ENCODE measurements at regions of chr17 and their contacts with region 1.

Region 1: GRCh38 chr17:29931231-29931932 is 1.4 kb upstream of the SSH2 start:
- DNase-seq: peak; percentile 75
- H3K4me3 ChIP-seq: peak overlapping the region; percentile 84 to 99
- H3K27ac ChIP-seq: peak overlapping the region; percentile 80 to 83
- H3K4me1 ChIP-seq: peaks cover 21 to 24% of the 10 kb centered on the region in 2 experiments; a peak in 3 of 4 replicates
- H3K27me3 ChIP-seq: no peaks in the 10 kb centered on the region
- CTCF ChIP-seq: peak; percentile 96
- EP300 ChIP-seq: no peak
- RAD21 ChIP-seq: peak; percentile 93

Region 2: DNA sequence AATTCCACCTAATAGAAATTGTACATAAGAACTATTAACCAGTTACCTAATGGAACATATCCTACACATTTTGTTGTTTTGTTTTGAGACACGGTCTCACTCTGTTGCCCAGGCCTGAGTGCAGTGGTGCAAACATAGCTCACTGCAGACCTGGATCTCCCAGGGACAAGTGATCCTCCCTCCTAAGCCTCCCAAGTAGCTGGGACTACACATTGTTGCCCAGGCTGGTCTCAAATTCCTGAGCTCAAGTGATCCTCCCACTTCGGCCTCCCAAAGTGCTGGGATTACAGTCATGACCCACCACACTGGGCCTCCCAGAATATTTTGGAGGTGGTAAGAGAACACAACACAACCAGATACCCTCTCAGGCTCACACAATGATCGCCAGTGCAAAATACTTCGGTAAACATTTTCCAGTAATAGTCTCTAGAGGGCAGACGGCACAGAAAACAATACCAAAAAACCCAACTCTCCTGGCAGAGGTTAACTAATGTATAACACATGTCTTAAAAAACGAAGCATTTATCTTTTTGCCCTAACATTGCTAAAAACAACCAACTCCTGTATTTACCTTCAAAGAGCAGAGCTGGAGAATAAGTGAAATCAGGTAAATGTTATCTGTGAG is 648.0 kb before region 1 on chr17:
- CTCF ChIA-PET with region 1: no interaction called
- POLR2A ChIA-PET with region 1: no interaction called
- DNase-seq: peak; percentile 49
- H3K4me3 ChIP-seq: no peak overlapping the region
- H3K27ac ChIP-seq: peak overlapping the region; percentile 4 to 64; a peak in 3 of 4 replicates
- H3K4me1 ChIP-seq: peaks cover 0 to 13% of the 10 kb centered on the region in 2 experiments; a peak in 2 of 4 replicates
- H3K27me3 ChIP-seq: no peaks in the 10 kb centered on the region
- CTCF ChIP-seq: peak; percentile 51
- EP300 ChIP-seq: no peak
- RAD21 ChIP-seq: peak; percentile 16; the same call in 1 of the 2 replicates

Region 3: DNA sequence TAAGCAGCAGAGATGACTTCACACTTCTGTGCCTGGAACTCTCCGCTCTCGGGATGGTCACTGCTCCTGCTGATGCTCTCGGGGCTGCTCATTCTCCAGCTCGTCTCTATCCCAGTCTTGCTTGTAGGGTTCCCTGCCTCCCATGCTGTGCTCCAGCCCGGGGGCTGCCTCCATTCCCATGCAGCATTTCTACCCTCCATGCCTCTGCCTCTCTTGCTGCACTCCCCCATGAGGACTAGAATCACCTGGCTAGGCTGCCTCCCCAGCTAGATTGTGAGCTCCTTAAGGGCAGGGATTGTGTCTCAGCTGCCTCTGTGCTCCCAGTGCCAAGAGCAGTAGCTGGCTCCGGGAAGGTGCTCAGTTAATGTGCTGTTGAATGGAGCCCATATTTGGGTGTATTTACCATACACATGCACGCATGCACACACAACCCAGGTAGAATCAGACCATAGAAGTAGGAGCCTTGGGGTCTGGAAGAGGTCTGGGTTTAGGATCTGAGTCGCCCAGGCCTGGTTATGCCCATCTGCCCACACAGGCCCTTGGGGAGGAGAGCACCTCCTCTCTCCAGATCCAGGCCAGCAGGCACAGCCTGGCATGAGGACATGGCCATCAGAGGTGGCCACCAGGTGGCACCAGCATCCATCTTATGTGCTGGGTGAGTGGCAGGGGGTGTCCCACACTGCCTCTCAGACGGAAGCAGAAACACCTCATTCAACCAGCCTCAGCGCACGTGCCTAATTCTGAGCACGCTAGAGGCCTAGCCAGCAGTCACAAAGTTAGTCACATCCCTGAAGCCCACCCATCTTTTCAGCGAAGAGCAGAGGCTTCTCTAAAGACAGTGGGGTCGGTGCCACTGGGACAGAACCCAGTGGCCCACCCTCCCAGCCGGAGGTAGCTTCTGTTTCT is 351.3 kb before region 1 on chr17:
- CTCF ChIA-PET with region 1: interaction called, 13 read pairs
- POLR2A ChIA-PET with region 1: no interaction called
- DNase-seq: peak; percentile 96
- H3K4me3 ChIP-seq: peak overlapping the region in 1 of 2 experiments; percentile 32; a peak in 1 of 4 replicates
- H3K27ac ChIP-seq: peak overlapping the region in 1 of 2 experiments; percentile 53; a peak in 2 of 4 replicates
- H3K4me1 ChIP-seq: peaks cover 2 to 17% of the 10 kb centered on the region in 2 experiments; a peak in 2 of 4 replicates
- H3K27me3 ChIP-seq: no peaks in the 10 kb centered on the region
- CTCF ChIP-seq: peak; percentile 85
- EP300 ChIP-seq: no peak
- RAD21 ChIP-seq: peak; percentile 92

Region 4: GRCh38 chr17:29640413-29640812 is 291.0 kb before region 1 on chr17:
- CTCF ChIA-PET with region 1: interaction called, 42 read pairs
- POLR2A ChIA-PET with region 1: interaction called, 6 read pairs
- DNase-seq: no peak
- H3K4me3 ChIP-seq: no peak overlapping the region
- H3K27ac ChIP-seq: peak overlapping the region; percentile 52 to 89
- H3K4me1 ChIP-seq: peaks cover 54% of the 10 kb centered on the region in 2 experiments; a peak in 3 of 4 replicates
- H3K27me3 ChIP-seq: no peaks in the 10 kb centered on the region
- CTCF ChIP-seq: no peak
- EP300 ChIP-seq: no peak
- RAD21 ChIP-seq: no peak

Region 5: DNA sequence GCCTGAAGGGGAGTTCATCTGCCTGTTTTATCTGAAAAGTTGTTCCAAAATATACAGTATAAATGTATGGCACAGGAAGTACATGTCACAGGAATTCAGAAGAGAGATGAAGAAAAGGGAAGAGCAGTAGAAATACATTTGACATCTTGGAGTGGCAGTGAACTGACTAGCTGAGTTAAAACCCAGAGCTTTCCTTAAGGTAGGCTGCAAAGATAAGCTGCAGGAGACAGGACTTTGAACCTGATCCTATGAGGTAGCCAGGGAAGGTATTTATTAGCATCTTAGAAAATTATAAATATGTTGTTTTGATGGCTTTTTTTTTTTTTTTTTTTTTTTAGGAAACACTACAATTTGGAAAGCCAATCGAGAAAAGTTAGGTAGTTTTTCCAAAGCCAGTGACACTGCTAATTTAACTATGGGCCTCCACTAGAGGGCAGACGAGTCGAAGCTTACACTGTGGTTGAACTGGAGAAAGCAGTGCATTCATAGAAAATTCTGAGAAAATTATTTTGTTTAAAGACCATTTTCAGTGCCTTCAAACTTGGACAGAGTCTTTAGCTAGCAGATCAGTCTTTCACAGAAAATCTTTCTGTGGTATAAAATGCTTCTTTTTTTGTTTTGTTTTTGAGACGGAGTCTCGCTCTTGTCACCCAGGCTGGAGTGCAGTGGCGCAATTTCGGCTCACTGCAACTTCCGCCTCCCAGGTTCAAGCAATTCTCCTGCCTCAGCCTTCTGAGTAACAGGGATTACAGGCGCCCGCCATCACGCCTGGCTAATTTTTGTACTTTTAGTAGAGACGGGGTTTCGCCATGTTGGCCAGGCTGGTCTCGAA is 123.6 kb before region 1 on chr17:
- CTCF ChIA-PET with region 1: interaction called, 118 read pairs
- POLR2A ChIA-PET with region 1: interaction called, 4 read pairs
- DNase-seq: peak; percentile 67
- H3K4me3 ChIP-seq: no peak overlapping the region; a peak in 1 of 4 replicates
- H3K27ac ChIP-seq: peak overlapping the region in 1 of 2 experiments; percentile 61; a peak in 2 of 4 replicates
- H3K4me1 ChIP-seq: peaks cover 3 to 10% of the 10 kb centered on the region in 2 experiments; a peak in 3 of 4 replicates
- H3K27me3 ChIP-seq: no peaks in the 10 kb centered on the region
- CTCF ChIP-seq: peak; percentile 85
- EP300 ChIP-seq: no peak
- RAD21 ChIP-seq: peak; percentile 93

Region 6: DNA sequence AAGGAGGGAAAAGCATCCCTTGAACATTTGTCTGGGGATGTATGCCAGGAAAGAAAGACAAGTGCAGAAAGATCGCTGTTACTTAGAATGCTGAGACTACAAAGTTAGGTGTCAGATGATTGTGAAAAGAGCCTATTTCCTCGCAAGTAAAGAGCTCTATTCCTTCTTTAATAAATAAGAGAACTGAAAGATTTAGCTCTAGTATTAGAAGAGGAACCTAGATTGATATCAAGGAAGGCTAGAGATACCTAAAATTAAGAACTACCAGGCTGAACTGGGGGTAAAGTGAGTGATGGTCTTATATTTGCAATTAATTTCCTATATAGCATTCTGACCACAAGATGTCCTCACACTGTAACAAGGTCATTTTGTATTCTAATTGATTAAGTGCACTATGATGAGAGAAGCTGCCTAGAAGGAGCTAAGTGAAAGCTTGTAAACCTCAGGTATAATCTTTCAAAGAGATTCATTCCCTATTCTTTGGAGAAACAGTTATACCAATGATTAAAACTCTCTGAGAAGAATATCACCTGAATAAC is 63.7 kb before region 1 on chr17:
- CTCF ChIA-PET with region 1: interaction called, 42 read pairs
- POLR2A ChIA-PET with region 1: no interaction called
- DNase-seq: no peak
- H3K4me3 ChIP-seq: no peak overlapping the region
- H3K27ac ChIP-seq: no peak overlapping the region
- H3K4me1 ChIP-seq: peaks cover 5 to 8% of the 10 kb centered on the region in 2 experiments; a peak in 3 of 4 replicates
- H3K27me3 ChIP-seq: no peaks in the 10 kb centered on the region
- CTCF ChIP-seq: peak; percentile 50
- EP300 ChIP-seq: no peak
- RAD21 ChIP-seq: peak; percentile 54

Region 7: DNA sequence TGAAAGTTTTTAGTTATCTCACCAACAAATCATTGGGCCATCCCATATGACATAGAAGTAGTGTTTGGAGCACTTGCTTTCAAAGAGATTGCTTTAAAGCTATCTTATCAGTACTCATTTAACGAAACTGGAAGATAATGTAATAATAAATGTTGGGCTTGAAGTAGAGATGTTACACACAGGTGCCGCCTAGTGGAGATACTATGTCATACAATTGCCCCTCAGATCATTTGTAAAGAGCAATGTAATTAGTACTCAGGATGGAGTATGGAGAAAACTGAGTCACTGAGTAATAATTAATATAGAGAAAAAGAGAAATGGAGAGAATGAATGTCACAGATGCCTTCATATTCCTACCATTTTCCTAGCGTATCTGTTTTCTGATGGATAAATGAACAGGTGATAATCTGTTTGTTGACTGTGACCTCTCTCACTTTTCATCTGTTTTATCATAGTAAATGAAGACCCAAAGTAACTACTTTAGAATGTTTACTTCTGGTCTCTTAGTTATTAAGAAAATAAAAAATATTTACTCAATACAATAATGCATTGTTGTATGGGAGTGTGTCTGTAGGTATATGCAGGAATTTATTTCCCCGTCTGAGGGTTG is 90.4 kb after region 1 on chr17:
- CTCF ChIA-PET with region 1: interaction called, 12 read pairs
- POLR2A ChIA-PET with region 1: no interaction called
- DNase-seq: peak; percentile 60
- H3K4me3 ChIP-seq: no peak overlapping the region
- H3K27ac ChIP-seq: no peak overlapping the region; a peak in 1 of 4 replicates
- H3K4me1 ChIP-seq: no peaks in the 10 kb centered on the region; a peak in 1 of 4 replicates
- H3K27me3 ChIP-seq: no peaks in the 10 kb centered on the region
- CTCF ChIP-seq: peak; percentile 88
- EP300 ChIP-seq: no peak
- RAD21 ChIP-seq: peak; percentile 76

Measured in SK-N-SH (cell line).